ENCODE measurements at regions of chr7 and their contacts with region 1.

Region 1: GRCh38 chr7:66140924-66141323 is 26.3 kb downstream of the CRCP start:
- DNase-seq: no peak
- H3K4me3 ChIP-seq: no peak overlapping the region
- H3K27ac ChIP-seq: peak overlapping the region; percentile 65 to 77 (median 71)
- H3K4me1 ChIP-seq: peaks cover 35 to 66% (median 58%) of the 10 kb centered on the region in 4 donors
- H3K27me3 ChIP-seq: no peaks in the 10 kb centered on the region
- CTCF ChIP-seq: peak; percentile 54 to 66 (median 62)
- EP300 ChIP-seq: no peak
- POLR2A ChIP-seq: no peak

Region 2: DNA sequence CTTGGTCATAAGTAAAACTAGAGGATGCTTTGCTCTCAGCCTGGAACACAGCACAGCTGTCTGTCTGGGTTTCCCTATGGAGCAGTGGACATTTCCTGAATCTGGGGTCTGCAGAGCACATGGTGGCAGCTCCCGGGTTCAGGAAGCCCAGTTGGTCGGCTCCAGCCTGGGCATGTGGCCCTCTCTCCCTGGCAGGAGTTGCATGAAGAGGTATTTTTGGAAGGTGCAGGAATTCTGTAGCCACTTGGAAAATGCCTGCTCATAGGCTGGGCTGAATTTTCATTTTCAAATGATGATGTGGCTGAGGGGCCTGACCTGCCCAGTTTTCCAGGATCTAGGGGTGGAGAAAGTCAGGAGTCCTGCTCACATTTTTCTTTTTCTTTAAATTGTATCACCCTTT is 57.5 kb after region 1 on chr7:
- intact Hi-C with region 1: no loop called
- DNase-seq: no peak
- H3K4me3 ChIP-seq: no peak overlapping the region
- H3K27ac ChIP-seq: no peak overlapping the region
- H3K4me1 ChIP-seq: no peaks in the 10 kb centered on the region
- H3K27me3 ChIP-seq: peaks cover 0 to 5% (median 0%) of the 10 kb centered on the region in 4 donors
- CTCF ChIP-seq: no peak
- EP300 ChIP-seq: no peak
- POLR2A ChIP-seq: no peak

Region 3: GRCh38 chr7:66493235-66494181 is 352.6 kb after region 1 on chr7:
- intact Hi-C with region 1: loop called (anchors 10 kb)
- DNase-seq: peak; percentile 99
- H3K4me3 ChIP-seq: peak overlapping the region; percentile 66 to 80 (median 79)
- H3K27ac ChIP-seq: peak overlapping the region; percentile 88 to 96 (median 91)
- H3K4me1 ChIP-seq: peaks cover 8 to 24% (median 18%) of the 10 kb centered on the region in 4 donors
- H3K27me3 ChIP-seq: no peaks in the 10 kb centered on the region
- CTCF ChIP-seq: peak; percentile 9 to 48 (median 18)
- EP300 ChIP-seq: no peak
- POLR2A ChIP-seq: peak; percentile 77